Activated T-helper 2 cell treated with anti-CD3 and anti-CD28 coated beads, Interferon-gamma antibody, Interleukin-2, Interleukin-4, amounts not matched to agents 10 μg/mL and 5 μg/mL and 100 μg/mL, durations not matched to agents 14 hours and 24 hours and 36 hours (primary cell): ENCODE measurements at regions of chr10 and their contacts with region 1.

Region 1: GRCh38 chr10:61903221-61903927 is 1.9 kb downstream of the ARID5B start:
- DNase-seq: peak; percentile 68
- H3K4me3 Mint-ChIP-seq: peak overlapping the region; percentile 95
- H3K27ac Mint-ChIP-seq: peak overlapping the region; percentile 93
- H3K4me1 Mint-ChIP-seq: peaks cover 40% of the 10 kb centered on the region
- H3K27me3 Mint-ChIP-seq: no peaks in the 10 kb centered on the region

Region 2: GRCh38 chr10:61376862-61377368 is 526.5 kb before region 1 on chr10:
- intact Hi-C with region 1: no loop called
- DNase-seq: no peak
- H3K4me3 Mint-ChIP-seq: no peak overlapping the region
- H3K27ac Mint-ChIP-seq: no peak overlapping the region
- H3K4me1 Mint-ChIP-seq: no peaks in the 10 kb centered on the region
- H3K27me3 Mint-ChIP-seq: no peaks in the 10 kb centered on the region

Region 3: DNA sequence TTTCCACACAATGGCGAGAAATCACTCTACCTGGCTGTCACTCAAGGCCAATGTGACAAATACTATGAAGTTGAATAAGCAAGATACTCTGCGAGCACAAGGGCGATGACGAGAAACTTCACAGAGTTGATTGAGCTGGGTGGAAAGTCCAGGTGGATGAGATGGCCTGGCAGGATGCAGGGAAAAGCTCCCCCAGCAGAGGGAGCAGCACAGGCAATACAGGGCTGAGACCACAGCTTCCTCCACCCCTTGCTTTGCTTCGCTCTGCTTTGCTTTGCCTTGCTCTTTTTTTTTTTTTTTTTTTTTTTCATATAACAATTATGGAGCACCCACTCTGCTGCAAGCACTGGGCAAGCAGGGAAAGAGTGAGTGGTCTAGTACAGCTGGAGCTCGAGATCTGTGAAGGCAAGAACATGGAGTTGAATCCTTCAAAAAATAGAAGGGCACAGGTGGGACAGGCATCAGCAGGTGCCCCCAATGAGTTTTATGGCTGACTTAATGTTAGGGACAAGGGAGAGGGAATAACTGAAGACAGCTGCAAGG is 152.4 kb before region 1 on chr10:
- intact Hi-C with region 1: loop called (anchors 2 kb)
- DNase-seq: peak; percentile 63
- H3K4me3 Mint-ChIP-seq: peak overlapping the region; percentile 40
- H3K27ac Mint-ChIP-seq: peak overlapping the region; percentile 71
- H3K4me1 Mint-ChIP-seq: peaks cover 40% of the 10 kb centered on the region
- H3K27me3 Mint-ChIP-seq: no peaks in the 10 kb centered on the region

Region 4: GRCh38 chr10:61964949-61965702 is 61.8 kb after region 1 on chr10:
- intact Hi-C with region 1: loop called (anchors 1 kb)
- DNase-seq: no peak
- H3K4me3 Mint-ChIP-seq: no peak overlapping the region
- H3K27ac Mint-ChIP-seq: peak overlapping the region; percentile 76
- H3K4me1 Mint-ChIP-seq: peaks cover 76% of the 10 kb centered on the region
- H3K27me3 Mint-ChIP-seq: no peaks in the 10 kb centered on the region

Region 5: GRCh38 chr10:62437696-62438095 is 534.3 kb after region 1 on chr10:
- intact Hi-C with region 1: loop called (anchors 10 kb)
- DNase-seq: no peak
- H3K4me3 Mint-ChIP-seq: no peak overlapping the region
- H3K27ac Mint-ChIP-seq: no peak overlapping the region
- H3K4me1 Mint-ChIP-seq: peaks cover 12% of the 10 kb centered on the region
- H3K27me3 Mint-ChIP-seq: peaks cover 50% of the 10 kb centered on the region

Region 6: DNA sequence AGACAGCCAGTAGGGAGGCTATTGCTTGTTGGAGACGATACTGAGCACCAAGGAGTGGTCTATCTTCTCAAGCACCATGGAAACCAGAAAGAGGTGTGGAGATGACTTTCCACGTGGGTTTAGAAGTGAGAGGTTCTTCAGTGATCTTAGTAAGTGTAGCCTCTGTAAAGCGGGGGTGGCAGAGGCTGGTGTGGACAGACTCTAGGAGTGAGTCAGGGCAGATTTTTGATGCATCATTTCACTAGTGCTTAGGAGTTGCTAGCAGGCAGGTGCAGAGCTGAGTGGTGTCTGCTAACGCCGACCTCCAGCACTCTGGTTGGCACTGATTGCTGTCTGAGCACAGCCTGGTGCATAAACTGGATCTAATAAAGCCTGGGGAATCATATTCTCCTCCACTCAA is 822.8 kb after region 1 on chr10:
- intact Hi-C with region 1: loop called (anchors 5 kb)
- DNase-seq: no peak
- H3K4me3 Mint-ChIP-seq: no peak overlapping the region
- H3K27ac Mint-ChIP-seq: peak overlapping the region; percentile 27
- H3K4me1 Mint-ChIP-seq: peaks cover 54% of the 10 kb centered on the region
- H3K27me3 Mint-ChIP-seq: no peaks in the 10 kb centered on the region